CD4-positive, alpha-beta T cell (primary cell): ENCODE measurements at regions of chr3 and their contacts with region 1.

Region 1: DNA sequence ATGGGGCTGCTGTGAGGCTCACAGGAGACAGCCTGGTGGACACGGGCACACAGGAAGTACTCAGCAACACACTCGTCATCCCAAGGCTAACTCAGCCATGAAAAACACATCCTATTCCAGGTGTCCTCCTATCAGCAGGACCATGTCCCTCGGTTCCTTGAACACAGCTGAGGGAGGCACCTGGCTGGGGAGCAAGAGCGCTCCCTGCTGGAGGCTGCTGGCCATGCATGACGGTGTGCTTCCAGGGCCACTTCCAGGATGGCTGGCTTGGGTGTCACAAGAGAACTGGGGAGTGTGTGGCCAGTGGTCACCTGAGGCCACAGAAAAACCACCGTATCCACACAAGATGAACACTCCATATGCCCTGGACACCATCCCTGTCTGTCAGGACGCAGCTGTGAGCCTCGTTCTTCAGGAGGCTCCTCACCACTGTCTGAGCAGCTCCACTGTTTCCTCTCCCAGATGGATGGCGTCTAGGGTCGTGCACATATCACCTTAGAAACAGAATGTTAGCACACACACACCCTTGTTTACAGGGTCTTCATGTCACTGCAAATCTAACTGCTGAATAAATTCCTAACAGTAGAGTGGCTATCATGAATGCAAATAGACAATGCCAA is 31.0 kb downstream of the POC1A start:
- DNase-seq: peak; percentile 62 to 88 (median 74)
- ATAC-seq: peak; percentile 98
- H3K4me3 ChIP-seq: no peak overlapping the region
- H3K4me3 Mint-ChIP-seq: no peak overlapping the region
- H3K27ac ChIP-seq: no peak overlapping the region
- H3K27ac Mint-ChIP-seq: no peak overlapping the region
- H3K4me1 ChIP-seq: peaks cover 8% of the 10 kb centered on the region
- H3K4me1 Mint-ChIP-seq: no peaks in the 10 kb centered on the region
- H3K27me3 ChIP-seq: no peaks in the 10 kb centered on the region
- H3K27me3 Mint-ChIP-seq: no peaks in the 10 kb centered on the region
- CTCF ChIP-seq: peak; percentile 93

Region 2: GRCh38 chr3:52036222-52036694 is 87.0 kb before region 1 on chr3:
- CTCF ChIA-PET with region 1: interaction called, 7 read pairs
- POLR2A ChIA-PET with region 1: interaction called, 3 read pairs
- intact Hi-C with region 1: loop called in 1 of 2 experiments (anchors 2 kb)
- DNase-seq: no peak
- ATAC-seq: no peak
- H3K4me3 ChIP-seq: no peak overlapping the region
- H3K4me3 Mint-ChIP-seq: no peak overlapping the region
- H3K27ac ChIP-seq: no peak overlapping the region
- H3K27ac Mint-ChIP-seq: no peak overlapping the region
- H3K4me1 ChIP-seq: no peaks in the 10 kb centered on the region
- H3K4me1 Mint-ChIP-seq: no peaks in the 10 kb centered on the region
- H3K27me3 ChIP-seq: no peaks in the 10 kb centered on the region
- H3K27me3 Mint-ChIP-seq: no peaks in the 10 kb centered on the region
- CTCF ChIP-seq: no peak

Region 3: GRCh38 chr3:52144034-52144795 is 21.0 kb after region 1 on chr3:
- CTCF ChIA-PET with region 1: interaction called, 6 read pairs
- POLR2A ChIA-PET with region 1: no interaction called
- intact Hi-C with region 1: loop called (anchors 1 kb)
- DNase-seq: peak; percentile 79 to 93 (median 87)
- ATAC-seq: peak; percentile 100
- H3K4me3 ChIP-seq: no peak overlapping the region
- H3K4me3 Mint-ChIP-seq: no peak overlapping the region
- H3K27ac ChIP-seq: no peak overlapping the region
- H3K27ac Mint-ChIP-seq: no peak overlapping the region
- H3K4me1 ChIP-seq: peaks cover 12% of the 10 kb centered on the region
- H3K4me1 Mint-ChIP-seq: peaks cover 8% of the 10 kb centered on the region
- H3K27me3 ChIP-seq: no peaks in the 10 kb centered on the region
- H3K27me3 Mint-ChIP-seq: no peaks in the 10 kb centered on the region
- CTCF ChIP-seq: peak; percentile 92

Region 4: GRCh38 chr3:52162250-52162872 is 39.1 kb after region 1 on chr3:
- CTCF ChIA-PET with region 1: no interaction called
- POLR2A ChIA-PET with region 1: no interaction called
- intact Hi-C with region 1: no loop called
- DNase-seq: no peak
- ATAC-seq: no peak
- H3K4me3 ChIP-seq: no peak overlapping the region
- H3K4me3 Mint-ChIP-seq: no peak overlapping the region
- H3K27ac ChIP-seq: no peak overlapping the region
- H3K27ac Mint-ChIP-seq: no peak overlapping the region
- H3K4me1 ChIP-seq: no peaks in the 10 kb centered on the region
- H3K4me1 Mint-ChIP-seq: no peaks in the 10 kb centered on the region
- H3K27me3 ChIP-seq: no peaks in the 10 kb centered on the region
- H3K27me3 Mint-ChIP-seq: no peaks in the 10 kb centered on the region
- CTCF ChIP-seq: no peak

Region 5: GRCh38 chr3:52339612-52340011 is 216.4 kb after region 1 on chr3:
- CTCF ChIA-PET with region 1: no interaction called
- POLR2A ChIA-PET with region 1: no interaction called
- intact Hi-C with region 1: no loop called
- DNase-seq: peak in 13 of 14 experiments; percentile 7 to 87 (median 28)
- ATAC-seq: peak; percentile 76
- H3K4me3 ChIP-seq: no peak overlapping the region
- H3K4me3 Mint-ChIP-seq: no peak overlapping the region
- H3K27ac ChIP-seq: no peak overlapping the region
- H3K27ac Mint-ChIP-seq: no peak overlapping the region
- H3K4me1 ChIP-seq: no peaks in the 10 kb centered on the region
- H3K4me1 Mint-ChIP-seq: peaks cover 11% of the 10 kb centered on the region
- H3K27me3 ChIP-seq: no peaks in the 10 kb centered on the region
- H3K27me3 Mint-ChIP-seq: no peaks in the 10 kb centered on the region
- CTCF ChIP-seq: peak; percentile 85